Adrenal gland (tissue), 19 donors: ENCODE measurements at regions of chr15 and their contacts with region 1.

Region 1: DNA sequence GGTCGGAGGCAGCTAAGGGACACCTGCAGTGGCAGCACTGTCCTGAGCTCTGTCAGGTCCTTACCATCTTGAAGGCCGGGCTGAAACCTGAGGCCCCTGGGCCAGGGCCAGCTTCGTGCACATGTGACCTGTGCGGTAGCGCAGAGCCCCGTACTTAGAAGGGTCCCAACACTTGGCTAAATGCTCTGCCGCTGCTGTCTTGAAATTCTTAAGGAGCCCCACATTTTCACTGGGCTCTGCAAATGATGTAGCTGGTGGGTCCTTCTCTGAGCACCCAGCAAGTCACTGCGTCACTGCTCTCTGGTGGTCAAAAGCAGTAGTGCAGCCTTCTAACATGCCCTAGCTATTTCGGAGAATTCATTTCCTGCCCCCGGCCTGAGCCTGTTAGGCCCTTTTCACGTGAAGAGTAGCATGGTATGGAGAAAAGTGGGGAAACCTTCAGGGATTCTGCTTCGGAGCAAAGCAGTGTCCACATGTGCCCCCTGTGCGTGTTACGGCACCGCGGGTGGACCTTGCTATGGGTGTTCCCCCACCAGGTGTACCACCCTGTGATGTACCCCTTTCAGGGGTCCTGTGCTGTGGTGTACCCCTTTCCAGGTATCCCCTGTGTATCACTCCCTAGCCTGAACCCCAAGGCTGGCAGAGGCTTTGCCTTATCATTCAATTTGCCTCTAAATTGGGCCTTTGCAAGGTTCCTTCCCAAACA is 79.7 kb downstream of the TMEM266 start:
- DNase-seq: peak; percentile 70 to 93 (median 83)
- H3K4me3 ChIP-seq: no peak overlapping the region
- H3K27ac ChIP-seq: no peak overlapping the region
- H3K4me1 ChIP-seq: peaks cover 0 to 6% of the 10 kb centered on the region in 2 donors
- H3K27me3 ChIP-seq: no peaks in the 10 kb centered on the region
- CTCF ChIP-seq: peak; percentile 90 to 95 (median 93)
- POLR2A ChIP-seq: no peak

Region 2: GRCh38 chr15:75799190-75799589 is 340.3 kb before region 1 on chr15:
- intact Hi-C with region 1: no loop called
- DNase-seq: no peak
- H3K4me3 ChIP-seq: no peak overlapping the region
- H3K27ac ChIP-seq: no peak overlapping the region
- H3K4me1 ChIP-seq: peaks cover 0 to 8% of the 10 kb centered on the region in 2 donors
- H3K27me3 ChIP-seq: peaks cover 17% of the 10 kb centered on the region
- CTCF ChIP-seq: no peak
- POLR2A ChIP-seq: no peak

Region 3: DNA sequence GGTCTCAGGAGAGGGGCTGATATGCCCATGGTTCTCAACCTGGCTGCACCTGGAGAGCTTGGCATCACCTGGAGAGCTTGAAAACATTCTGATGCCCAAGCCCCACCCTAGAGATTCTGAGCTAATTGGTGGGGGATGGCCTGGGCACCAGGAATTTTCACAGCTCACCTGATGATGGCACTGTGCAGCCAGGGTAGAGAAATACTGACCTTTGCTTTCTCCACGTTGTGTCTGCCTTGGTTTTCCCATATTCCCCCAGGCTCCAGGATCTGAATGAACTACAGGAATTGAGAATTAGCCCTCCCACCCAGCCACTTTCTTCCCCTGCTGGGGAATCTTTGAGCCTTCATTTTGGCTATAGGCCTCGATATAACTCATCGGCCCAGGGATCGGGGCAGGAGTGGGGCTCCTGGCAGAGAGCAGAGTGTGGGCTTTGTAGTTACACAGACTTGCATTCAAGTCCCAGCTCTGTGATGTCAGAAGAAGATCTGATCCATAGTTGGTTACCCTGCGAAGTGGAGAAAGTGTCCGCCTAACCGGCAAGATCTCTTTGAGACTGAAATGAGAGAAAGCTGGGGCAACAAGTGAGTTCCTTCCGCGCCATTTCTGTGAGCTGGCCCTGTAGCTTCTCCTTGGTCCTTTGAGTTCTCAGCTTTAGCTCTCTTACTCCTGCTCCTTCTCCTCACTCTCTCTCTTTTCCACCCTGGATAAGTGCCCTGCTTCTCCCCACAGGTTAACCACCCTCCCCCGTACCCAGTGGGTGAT is 329.4 kb before region 1 on chr15:
- intact Hi-C with region 1: loop called in 1 of 2 experiments (anchors 10 kb)
- DNase-seq: peak in 6 of 7 donors; percentile 18 to 64 (median 38)
- H3K4me3 ChIP-seq: no peak overlapping the region
- H3K27ac ChIP-seq: no peak overlapping the region
- H3K4me1 ChIP-seq: no peaks in the 10 kb centered on the region
- H3K27me3 ChIP-seq: no peaks in the 10 kb centered on the region
- CTCF ChIP-seq: peak in 5 of 6 experiments; percentile 27 to 56 (median 46)
- POLR2A ChIP-seq: no peak

Region 4: GRCh38 chr15:76057332-76058000 is 82.1 kb before region 1 on chr15:
- intact Hi-C with region 1: loop called (anchors 2 to 5 kb)
- DNase-seq: peak in 5 of 7 donors; percentile 33 to 57 (median 43)
- H3K4me3 ChIP-seq: peak overlapping the region in 1 of 4 donors; percentile 46
- H3K27ac ChIP-seq: no peak overlapping the region
- H3K4me1 ChIP-seq: peaks cover 0 to 14% of the 10 kb centered on the region in 2 donors
- H3K27me3 ChIP-seq: no peaks in the 10 kb centered on the region
- CTCF ChIP-seq: peak; percentile 67 to 79 (median 73)
- POLR2A ChIP-seq: no peak

Region 5: GRCh38 chr15:76084256-76084655 is 55.3 kb before region 1 on chr15:
- intact Hi-C with region 1: no loop called
- DNase-seq: no peak
- H3K4me3 ChIP-seq: no peak overlapping the region
- H3K27ac ChIP-seq: no peak overlapping the region
- H3K4me1 ChIP-seq: no peaks in the 10 kb centered on the region
- H3K27me3 ChIP-seq: no peaks in the 10 kb centered on the region
- CTCF ChIP-seq: no peak
- POLR2A ChIP-seq: no peak